H1 (cell line): ENCODE measurements at regions of chr6 and their contacts with region 1.

Region 1: DNA sequence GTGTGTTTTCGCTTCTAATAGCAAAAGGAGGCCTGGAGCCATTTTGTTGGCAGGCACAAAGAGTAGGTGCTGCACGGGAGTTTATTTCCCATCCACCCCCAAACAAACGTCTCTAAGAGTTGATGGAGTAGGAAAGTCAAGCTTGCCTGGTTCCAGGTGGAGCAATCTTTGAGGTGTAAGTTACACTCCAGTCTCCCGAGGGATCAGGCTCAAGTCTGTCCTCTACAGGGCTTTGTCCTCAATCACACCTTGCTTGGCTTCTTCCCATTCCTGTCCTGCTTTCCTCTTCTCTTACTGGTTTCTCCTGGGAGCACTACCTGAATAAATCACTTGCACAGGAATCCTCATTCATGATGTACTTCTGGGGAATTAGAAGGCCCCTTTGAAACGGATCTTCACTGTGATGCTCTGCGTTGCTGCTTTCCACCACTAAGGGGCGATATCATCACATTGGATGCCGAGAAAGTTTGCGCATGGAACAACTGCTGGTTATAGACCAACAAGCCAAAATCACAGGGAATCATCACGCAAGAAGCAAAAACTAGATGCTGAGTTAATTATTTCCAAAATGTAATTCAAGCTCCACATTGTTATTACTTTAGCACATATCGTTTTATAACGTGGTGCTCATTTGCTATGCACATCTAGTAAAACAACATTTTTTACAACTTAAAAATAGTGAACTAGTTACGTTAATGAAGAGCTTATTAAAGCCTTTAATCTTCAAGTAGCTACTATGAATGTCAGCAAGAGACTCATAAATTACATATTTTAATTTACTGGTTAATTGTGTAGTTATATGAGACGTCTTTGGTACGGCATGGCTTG is 156.8 kb downstream of the DNAH8 start:
- DNase-seq: peak; percentile 39 to 86
- H3K4me3 ChIP-seq: no peak overlapping the region
- H3K27ac ChIP-seq: no peak overlapping the region
- H3K4me1 ChIP-seq: no peaks in the 10 kb centered on the region; a peak in 1 of 7 replicates
- H3K27me3 ChIP-seq: no peaks in the 10 kb centered on the region
- CTCF ChIP-seq: peak; percentile 73 to 96 (median 91)
- EP300 ChIP-seq: no peak
- POLR2A ChIP-seq: no peak
- RAD21 ChIP-seq: peak; percentile 92 to 96

Region 2: GRCh38 chr6:38784506-38785235 is 87.3 kb before region 1 on chr6:
- CTCF ChIA-PET with region 1: no interaction called
- POLR2A ChIA-PET with region 1: no interaction called
- DNase-seq: no peak
- H3K4me3 ChIP-seq: no peak overlapping the region
- H3K27ac ChIP-seq: no peak overlapping the region
- H3K4me1 ChIP-seq: peaks cover 0 to 10% (median 5%) of the 10 kb centered on the region in 4 experiments; a peak in 3 of 7 replicates
- H3K27me3 ChIP-seq: no peaks in the 10 kb centered on the region
- CTCF ChIP-seq: no peak
- EP300 ChIP-seq: no peak
- POLR2A ChIP-seq: no peak
- RAD21 ChIP-seq: no peak

Region 3: DNA sequence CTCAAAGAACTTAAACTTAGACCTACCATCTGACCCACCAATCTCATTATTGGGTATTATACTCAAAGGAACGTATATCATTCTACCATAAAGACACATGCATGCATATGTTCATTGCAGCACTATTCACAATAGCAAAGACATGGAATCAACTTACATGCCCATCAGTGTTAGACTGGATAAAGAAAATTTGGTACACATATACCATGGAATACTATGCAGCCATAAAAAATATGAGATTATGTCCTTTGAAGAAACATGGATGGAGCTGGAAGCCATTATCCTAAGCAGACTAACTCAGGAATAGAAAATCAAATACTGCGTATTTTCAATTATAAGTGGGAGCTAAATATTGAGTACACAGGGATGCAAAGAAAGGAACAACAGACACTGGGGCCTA is 10.2 kb after region 1 on chr6:
- CTCF ChIA-PET with region 1: interaction called, 28 read pairs
- POLR2A ChIA-PET with region 1: no interaction called
- DNase-seq: no peak
- H3K4me3 ChIP-seq: no peak overlapping the region
- H3K27ac ChIP-seq: no peak overlapping the region
- H3K4me1 ChIP-seq: no peaks in the 10 kb centered on the region
- H3K27me3 ChIP-seq: peaks cover 0 to 2% (median 0%) of the 10 kb centered on the region in 4 experiments; a peak in 1 of 7 replicates
- CTCF ChIP-seq: no peak
- EP300 ChIP-seq: no peak
- POLR2A ChIP-seq: no peak
- RAD21 ChIP-seq: no peak

Region 4: GRCh38 chr6:38901802-38902522 is 30.0 kb after region 1 on chr6:
- CTCF ChIA-PET with region 1: interaction called, 23 read pairs
- POLR2A ChIA-PET with region 1: no interaction called
- DNase-seq: no peak
- H3K4me3 ChIP-seq: no peak overlapping the region
- H3K27ac ChIP-seq: no peak overlapping the region
- H3K4me1 ChIP-seq: peaks cover 2 to 8% (median 6%) of the 10 kb centered on the region in 4 experiments; a peak in 4 of 7 replicates
- H3K27me3 ChIP-seq: no peaks in the 10 kb centered on the region
- CTCF ChIP-seq: no peak
- EP300 ChIP-seq: no peak
- POLR2A ChIP-seq: no peak
- RAD21 ChIP-seq: peak; percentile 36 to 38

Region 5: DNA sequence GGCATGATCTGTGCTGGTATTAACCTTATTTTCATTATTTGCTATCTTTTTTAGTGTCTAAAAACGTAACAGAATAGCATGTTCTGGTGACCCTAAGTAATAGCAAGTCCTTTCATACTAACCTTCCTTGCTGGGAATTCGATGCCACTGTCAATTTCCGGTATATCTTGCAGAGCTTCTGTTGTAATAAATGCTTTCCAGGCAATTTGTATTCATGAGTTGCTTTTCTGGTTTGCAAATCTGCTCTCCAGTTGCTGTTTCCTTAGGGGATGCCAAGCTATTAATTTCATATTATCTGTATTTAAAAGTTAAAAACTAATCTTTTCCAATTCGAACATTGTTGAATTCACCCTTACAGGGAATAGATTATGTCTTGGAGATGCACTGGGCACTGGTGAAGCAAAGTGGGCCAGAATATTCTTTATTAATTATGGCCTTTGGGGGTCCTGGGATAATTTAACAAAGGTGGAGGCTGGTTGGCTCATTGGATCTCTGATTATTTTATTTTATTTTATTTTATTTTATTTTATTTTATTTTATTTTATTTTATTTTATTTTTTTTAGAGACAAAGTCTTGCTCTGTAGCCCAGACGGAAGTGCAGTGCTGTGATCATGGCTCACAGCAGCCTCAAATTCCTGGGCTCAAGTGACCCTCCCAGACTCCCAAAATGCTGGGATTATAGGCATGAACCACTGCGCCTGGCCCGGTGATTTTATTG is 53.0 kb after region 1 on chr6:
- CTCF ChIA-PET with region 1: interaction called, 12 read pairs
- POLR2A ChIA-PET with region 1: no interaction called
- DNase-seq: no peak
- H3K4me3 ChIP-seq: no peak overlapping the region
- H3K27ac ChIP-seq: no peak overlapping the region
- H3K4me1 ChIP-seq: peaks cover 0 to 13% (median 2%) of the 10 kb centered on the region in 4 experiments; a peak in 4 of 7 replicates
- H3K27me3 ChIP-seq: no peaks in the 10 kb centered on the region
- CTCF ChIP-seq: no peak
- EP300 ChIP-seq: no peak
- POLR2A ChIP-seq: no peak
- RAD21 ChIP-seq: no peak

Region 6: DNA sequence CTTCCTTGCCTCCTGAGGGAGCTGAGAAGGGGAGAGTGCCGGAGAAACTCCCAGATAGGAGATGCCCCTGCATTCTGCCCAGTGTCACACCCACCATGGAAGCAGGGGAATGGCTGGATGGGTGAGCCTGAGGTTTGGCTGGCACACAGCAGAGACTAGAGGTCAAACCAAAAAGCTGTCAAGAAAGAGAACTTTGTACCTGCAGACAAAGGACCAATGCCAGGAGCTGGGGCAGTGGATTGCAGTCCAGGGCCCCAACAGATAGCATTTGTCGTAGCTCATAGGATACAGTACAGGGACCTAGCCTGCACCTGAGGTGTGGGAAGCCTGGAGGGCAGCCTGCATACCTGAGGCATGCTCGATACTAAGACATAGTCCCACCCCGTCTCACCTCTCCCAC is 70.5 kb after region 1 on chr6:
- CTCF ChIA-PET with region 1: interaction called, 12 read pairs
- POLR2A ChIA-PET with region 1: no interaction called
- DNase-seq: no peak
- H3K4me3 ChIP-seq: no peak overlapping the region
- H3K27ac ChIP-seq: no peak overlapping the region
- H3K4me1 ChIP-seq: peaks cover 0 to 3% (median 0%) of the 10 kb centered on the region in 4 experiments; a peak in 1 of 7 replicates
- H3K27me3 ChIP-seq: no peaks in the 10 kb centered on the region
- CTCF ChIP-seq: no peak
- EP300 ChIP-seq: no peak
- POLR2A ChIP-seq: no peak
- RAD21 ChIP-seq: no peak

Region 7: GRCh38 chr6:38973178-38974054 is 101.5 kb after region 1 on chr6:
- CTCF ChIA-PET with region 1: interaction called, 13 read pairs
- POLR2A ChIA-PET with region 1: no interaction called
- DNase-seq: no peak
- H3K4me3 ChIP-seq: no peak overlapping the region
- H3K27ac ChIP-seq: no peak overlapping the region
- H3K4me1 ChIP-seq: peaks cover 0 to 3% (median 2%) of the 10 kb centered on the region in 4 experiments; a peak in 4 of 7 replicates
- H3K27me3 ChIP-seq: no peaks in the 10 kb centered on the region
- CTCF ChIP-seq: peak in 2 of 3 experiments; percentile 68 to 92; a peak in 3 of 4 replicates
- EP300 ChIP-seq: no peak
- POLR2A ChIP-seq: no peak
- RAD21 ChIP-seq: peak; percentile 71 to 77

Region 8: DNA sequence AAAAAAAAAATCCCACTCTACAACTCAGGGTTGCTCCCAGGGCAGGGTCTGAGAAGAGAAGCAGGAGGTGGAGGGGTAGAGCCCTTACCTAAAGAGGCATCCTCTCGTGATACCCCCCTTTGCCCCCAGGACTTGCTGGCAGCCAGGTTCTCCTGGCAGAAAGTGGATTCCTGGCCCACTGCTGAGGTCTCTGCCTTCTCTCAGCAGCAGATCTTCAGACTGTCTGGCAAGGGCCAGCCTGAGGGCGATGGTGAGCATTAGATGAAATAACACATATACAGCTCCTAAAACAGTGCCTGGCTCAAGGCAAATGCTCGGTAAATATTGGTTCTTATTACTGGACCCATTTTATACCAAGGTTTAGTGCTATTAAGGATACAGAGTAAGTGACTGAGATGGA is 171.8 kb after region 1 on chr6:
- CTCF ChIA-PET with region 1: no interaction called
- POLR2A ChIA-PET with region 1: no interaction called
- DNase-seq: no peak
- H3K4me3 ChIP-seq: no peak overlapping the region
- H3K27ac ChIP-seq: no peak overlapping the region
- H3K4me1 ChIP-seq: peaks cover 0 to 2% (median 0%) of the 10 kb centered on the region in 4 experiments; a peak in 1 of 7 replicates
- H3K27me3 ChIP-seq: peaks cover 0 to 22% (median 18%) of the 10 kb centered on the region in 4 experiments; a peak in 6 of 7 replicates
- CTCF ChIP-seq: no peak
- EP300 ChIP-seq: no peak
- POLR2A ChIP-seq: no peak
- RAD21 ChIP-seq: no peak